Activated T-helper 1 cell treated with anti-CD3 and anti-CD28 coated beads, Interleukin-12 subunit alpha, Interleukin-12 subunit beta, Interleukin-2, Interleukin-4 antibody, amounts not matched to agents 30 ng/mL and 10 ng/mL and 1 ng/mL, durations not matched to agents 14 hours and 24 hours and 36 hours (primary cell): ENCODE measurements at regions of chr12 and their contacts with region 1.

Region 1: DNA sequence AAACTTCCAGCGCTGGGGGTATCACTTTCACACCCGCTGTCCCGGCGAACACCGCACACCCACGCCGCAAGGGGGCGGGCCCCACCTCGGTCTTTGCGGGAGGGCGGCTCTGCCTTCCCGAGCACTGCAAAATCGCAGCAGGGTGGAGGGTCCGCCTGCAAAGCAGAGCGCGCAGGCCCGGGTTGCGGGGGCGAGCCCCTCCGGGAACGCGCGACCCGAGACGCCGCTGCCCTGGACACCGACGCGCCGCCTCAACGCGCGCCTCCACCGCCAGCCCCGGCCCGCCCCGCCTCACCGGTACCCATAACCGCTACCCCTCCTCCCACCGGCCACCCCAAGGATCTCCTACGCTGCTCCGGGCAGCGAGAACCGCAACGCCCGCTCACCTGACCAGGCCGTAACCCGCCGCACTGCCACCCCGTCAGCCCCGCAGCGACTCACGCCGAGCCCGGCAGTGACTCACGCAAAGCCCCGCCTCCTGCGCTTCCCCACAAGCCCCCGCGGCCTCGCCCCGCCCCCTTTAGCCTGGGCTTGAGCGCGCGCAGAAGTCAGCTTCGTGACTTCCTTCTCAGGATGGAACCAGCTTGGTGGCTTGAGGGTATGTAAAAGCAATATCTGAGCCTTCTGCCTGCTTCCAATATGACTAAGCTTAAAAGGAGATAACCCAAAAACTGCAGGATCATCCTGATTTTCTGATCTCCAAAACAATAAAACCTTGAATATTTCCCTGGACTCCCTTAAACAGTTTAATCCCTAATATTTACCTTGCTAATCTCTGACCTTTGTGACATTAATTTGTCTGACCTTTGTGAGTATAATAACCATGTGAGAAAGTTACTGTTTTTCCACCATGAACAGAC is at the start of gene RPAP3:
- DNase-seq: peak; percentile 97
- H3K4me3 Mint-ChIP-seq: peak within 1 kb of the TSS; percentile 97
- H3K27ac Mint-ChIP-seq: peak within 1 kb of the TSS; percentile 98
- H3K4me1 Mint-ChIP-seq: peaks cover 58% of the 10 kb centered on the region
- H3K27me3 Mint-ChIP-seq: no peaks in the 10 kb centered on the region
- total RNA-seq, gene RPAP3: 61.2 and 64.9 TPM in 2 replicates

Region 2: GRCh38 chr12:46372544-46373110 is 1333.2 kb before region 1 on chr12 and contains the start of gene SLC38A2:
- intact Hi-C with region 1: loop called (anchors 5 kb)
- DNase-seq: peak; percentile 95
- H3K4me3 Mint-ChIP-seq: peak within 1 kb of the TSS; percentile 92
- H3K27ac Mint-ChIP-seq: peak within 1 kb of the TSS; percentile 99
- H3K4me1 Mint-ChIP-seq: peaks cover 53% of the 10 kb centered on the region
- H3K27me3 Mint-ChIP-seq: peaks cover 3% of the 10 kb centered on the region
- total RNA-seq, gene SLC38A2: 157 and 161 TPM in 2 replicates

Region 3: GRCh38 chr12:47812797-47813510 is 107.2 kb after region 1 on chr12:
- intact Hi-C with region 1: loop called (anchors 1 kb)
- DNase-seq: peak; percentile 92
- H3K4me3 Mint-ChIP-seq: peak overlapping the region; percentile 96
- H3K27ac Mint-ChIP-seq: peak overlapping the region; percentile 98
- H3K4me1 Mint-ChIP-seq: peaks cover 92% of the 10 kb centered on the region
- H3K27me3 Mint-ChIP-seq: no peaks in the 10 kb centered on the region

Region 4: GRCh38 chr12:47882781-47883546 is 177.2 kb after region 1 on chr12:
- intact Hi-C with region 1: loop called (anchors 2 kb)
- DNase-seq: peak; percentile 44
- H3K4me3 Mint-ChIP-seq: peak overlapping the region; percentile 94
- H3K27ac Mint-ChIP-seq: peak overlapping the region; percentile 100
- H3K4me1 Mint-ChIP-seq: peaks cover 91% of the 10 kb centered on the region
- H3K27me3 Mint-ChIP-seq: no peaks in the 10 kb centered on the region

Region 5: DNA sequence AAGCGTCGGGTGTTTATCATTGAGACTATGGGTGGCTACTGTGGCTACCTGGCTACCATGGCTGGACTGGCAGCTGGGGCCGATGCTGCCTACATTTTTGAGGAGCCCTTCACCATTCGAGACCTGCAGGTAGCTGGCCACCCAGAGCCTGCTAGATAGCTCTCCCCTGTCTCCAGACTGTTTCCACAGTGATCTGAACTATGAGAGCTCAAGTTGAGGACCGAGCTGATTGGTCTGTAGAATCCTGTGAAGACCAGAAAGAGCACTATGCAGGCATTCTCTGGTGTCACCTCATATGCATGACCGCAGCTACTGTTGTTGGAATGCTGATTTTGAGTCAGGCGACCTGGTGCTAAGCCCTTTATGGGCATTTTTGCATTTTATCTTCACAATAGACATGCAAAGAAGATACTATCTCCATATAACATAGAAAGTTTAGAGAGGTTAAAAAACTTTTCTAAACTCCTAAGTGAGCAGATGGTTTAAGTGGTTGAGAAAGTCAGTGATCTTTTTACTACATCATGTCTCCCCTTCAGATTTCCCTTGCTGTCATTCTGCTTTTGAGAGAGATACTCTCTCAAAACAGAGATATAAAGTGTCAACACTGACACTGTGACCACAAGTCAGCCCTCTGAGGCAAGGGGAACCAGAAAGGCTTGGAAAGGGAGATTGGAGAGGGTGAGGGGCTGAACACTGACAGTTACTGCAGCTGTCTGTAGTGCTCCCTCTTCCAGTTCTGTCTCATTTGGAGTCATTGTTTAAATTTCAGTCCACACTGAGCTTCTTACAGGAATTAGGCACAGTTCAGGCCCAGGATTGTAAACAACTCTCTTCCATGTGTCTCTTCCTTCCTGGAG is 437.2 kb after region 1 on chr12:
- intact Hi-C with region 1: no loop called
- DNase-seq: no peak
- H3K4me3 Mint-ChIP-seq: no peak overlapping the region
- H3K27ac Mint-ChIP-seq: no peak overlapping the region
- H3K4me1 Mint-ChIP-seq: no peaks in the 10 kb centered on the region
- H3K27me3 Mint-ChIP-seq: no peaks in the 10 kb centered on the region

Region 6: DNA sequence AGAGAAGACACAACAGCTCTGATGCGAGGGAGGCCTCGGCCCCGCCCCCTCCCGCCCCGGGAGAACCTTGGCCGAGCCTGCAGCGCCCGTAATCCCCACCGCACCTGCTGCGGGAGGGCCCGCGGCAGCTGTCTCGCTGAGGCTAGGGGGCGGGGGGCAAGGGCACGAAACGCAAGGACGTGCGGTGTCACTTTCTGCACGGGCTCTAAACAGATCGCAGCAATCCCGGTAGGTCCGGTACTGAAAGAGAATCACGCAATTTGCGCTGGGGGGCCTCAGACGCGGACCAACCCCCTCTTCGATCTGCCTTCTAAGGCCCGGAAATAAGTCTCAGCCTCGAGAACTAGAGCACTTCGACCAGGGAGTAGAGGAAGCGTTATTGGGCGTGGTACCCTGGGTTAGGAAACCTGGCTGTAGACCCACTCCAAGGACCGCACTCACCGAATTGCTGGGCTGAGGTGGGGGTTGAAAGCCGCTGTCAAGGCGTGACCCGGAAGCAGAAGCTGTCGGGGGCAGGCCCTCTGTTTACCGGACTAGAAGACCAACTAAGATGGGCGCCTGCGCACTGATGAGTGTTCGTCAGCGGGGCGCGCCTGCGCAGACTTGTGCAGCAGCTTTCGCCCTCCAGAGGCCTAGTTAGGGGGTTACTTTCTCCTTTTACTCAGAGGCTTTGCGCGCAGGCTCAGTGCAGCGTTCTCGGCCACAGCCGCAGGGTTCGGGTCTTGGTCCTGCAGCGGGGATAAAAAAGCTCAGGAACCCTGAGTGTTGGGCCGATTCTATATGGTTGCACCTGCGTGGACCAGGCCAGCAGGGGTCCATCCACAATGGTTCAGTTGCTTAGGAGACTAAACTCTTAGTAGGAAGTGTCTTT is 451.5 kb after region 1 on chr12 and contains the start of gene ASB8:
- intact Hi-C with region 1: loop called (anchors 1 kb)
- DNase-seq: peak; percentile 98
- H3K4me3 Mint-ChIP-seq: peak within 1 kb of the TSS; percentile 94
- H3K27ac Mint-ChIP-seq: peak within 1 kb of the TSS; percentile 86
- H3K4me1 Mint-ChIP-seq: peaks cover 21% of the 10 kb centered on the region
- H3K27me3 Mint-ChIP-seq: no peaks in the 10 kb centered on the region
- total RNA-seq, gene ASB8: 33.3 and 36.1 TPM in 2 replicates